ENCODE measurements at regions of chr12 and their contacts with region 1.

Region 1: GRCh38 chr12:107670999-107671643 is 14.5 kb upstream of the PWP1 start:
- DNase-seq: peak; percentile 72
- ATAC-seq: peak; percentile 90
- H3K4me3 Mint-ChIP-seq: no peak overlapping the region
- H3K27ac Mint-ChIP-seq: no peak overlapping the region
- H3K4me1 Mint-ChIP-seq: peaks cover 14% of the 10 kb centered on the region
- H3K27me3 Mint-ChIP-seq: 0 out of 2 replicates have a peak, but pooled peaks cover 3% of the 10 kb centered on the region
- CTCF ChIP-seq: peak; percentile 80

Region 2: GRCh38 chr12:107635139-107635538 is 36.0 kb before region 1 on chr12:
- CTCF ChIA-PET with region 1: interaction called, 23 read pairs
- POLR2A ChIA-PET with region 1: interaction called, 3 read pairs
- DNase-seq: peak; percentile 57
- ATAC-seq: peak; percentile 90
- H3K4me3 Mint-ChIP-seq: peak overlapping the region; percentile 49
- H3K27ac Mint-ChIP-seq: peak overlapping the region; percentile 99
- H3K4me1 Mint-ChIP-seq: peaks cover 53% of the 10 kb centered on the region
- H3K27me3 Mint-ChIP-seq: peaks cover 4% of the 10 kb centered on the region; the same call in 1 of the 2 replicates
- CTCF ChIP-seq: no peak

Region 3: GRCh38 chr12:107655281-107656065 is 15.6 kb before region 1 on chr12:
- CTCF ChIA-PET with region 1: interaction called, 28 read pairs
- POLR2A ChIA-PET with region 1: no interaction called
- DNase-seq: no peak
- ATAC-seq: no peak
- H3K4me3 Mint-ChIP-seq: no peak overlapping the region
- H3K27ac Mint-ChIP-seq: peak overlapping the region; percentile 88
- H3K4me1 Mint-ChIP-seq: peaks cover 44% of the 10 kb centered on the region
- H3K27me3 Mint-ChIP-seq: no peaks in the 10 kb centered on the region
- CTCF ChIP-seq: no peak

Region 4: DNA sequence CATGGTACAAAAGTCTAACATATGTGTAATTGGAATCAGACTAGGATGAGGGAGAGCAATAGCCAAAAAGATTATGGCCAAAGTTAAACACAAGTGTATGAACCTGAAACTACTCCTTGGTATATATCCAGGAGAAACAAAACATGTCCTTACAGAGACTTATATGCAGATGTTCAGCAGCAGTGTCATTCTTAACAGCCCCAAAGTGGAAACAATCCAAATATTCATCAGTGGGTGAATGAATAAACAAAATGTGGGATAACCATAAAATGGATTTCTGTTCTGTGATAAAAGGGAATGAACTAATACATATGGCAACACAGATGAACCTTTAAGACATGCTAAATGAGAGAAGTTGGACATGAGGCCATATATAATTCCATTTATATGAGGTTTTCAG is 44.7 kb after region 1 on chr12:
- CTCF ChIA-PET with region 1: no interaction called
- POLR2A ChIA-PET with region 1: no interaction called
- DNase-seq: no peak
- ATAC-seq: no peak
- H3K4me3 Mint-ChIP-seq: no peak overlapping the region
- H3K27ac Mint-ChIP-seq: no peak overlapping the region
- H3K4me1 Mint-ChIP-seq: no peaks in the 10 kb centered on the region
- H3K27me3 Mint-ChIP-seq: no peaks in the 10 kb centered on the region
- CTCF ChIP-seq: no peak

Region 5: GRCh38 chr12:107843351-107844311 is 172.5 kb after region 1 on chr12:
- CTCF ChIA-PET with region 1: interaction called, 10 read pairs
- POLR2A ChIA-PET with region 1: no interaction called
- DNase-seq: peak; percentile 50
- ATAC-seq: peak; percentile 60
- H3K4me3 Mint-ChIP-seq: peak overlapping the region; percentile 82
- H3K27ac Mint-ChIP-seq: no peak overlapping the region
- H3K4me1 Mint-ChIP-seq: peaks cover 3% of the 10 kb centered on the region; the same call in 1 of the 2 replicates
- H3K27me3 Mint-ChIP-seq: peaks cover 82% of the 10 kb centered on the region
- CTCF ChIP-seq: no peak

Region 6: GRCh38 chr12:107912421-107913004 is 241.4 kb after region 1 on chr12:
- CTCF ChIA-PET with region 1: interaction called, 15 read pairs
- POLR2A ChIA-PET with region 1: no interaction called
- DNase-seq: peak; percentile 85
- ATAC-seq: peak; percentile 94
- H3K4me3 Mint-ChIP-seq: peak overlapping the region; percentile 93
- H3K27ac Mint-ChIP-seq: no peak overlapping the region
- H3K4me1 Mint-ChIP-seq: no peaks in the 10 kb centered on the region
- H3K27me3 Mint-ChIP-seq: peaks cover 52% of the 10 kb centered on the region
- CTCF ChIP-seq: peak; percentile 94

Measured in WTC11 (cell line).